Motor neuron (in vitro differentiated cells): ENCODE measurements at regions of chr17 and their contacts with region 1.

Region 1: DNA sequence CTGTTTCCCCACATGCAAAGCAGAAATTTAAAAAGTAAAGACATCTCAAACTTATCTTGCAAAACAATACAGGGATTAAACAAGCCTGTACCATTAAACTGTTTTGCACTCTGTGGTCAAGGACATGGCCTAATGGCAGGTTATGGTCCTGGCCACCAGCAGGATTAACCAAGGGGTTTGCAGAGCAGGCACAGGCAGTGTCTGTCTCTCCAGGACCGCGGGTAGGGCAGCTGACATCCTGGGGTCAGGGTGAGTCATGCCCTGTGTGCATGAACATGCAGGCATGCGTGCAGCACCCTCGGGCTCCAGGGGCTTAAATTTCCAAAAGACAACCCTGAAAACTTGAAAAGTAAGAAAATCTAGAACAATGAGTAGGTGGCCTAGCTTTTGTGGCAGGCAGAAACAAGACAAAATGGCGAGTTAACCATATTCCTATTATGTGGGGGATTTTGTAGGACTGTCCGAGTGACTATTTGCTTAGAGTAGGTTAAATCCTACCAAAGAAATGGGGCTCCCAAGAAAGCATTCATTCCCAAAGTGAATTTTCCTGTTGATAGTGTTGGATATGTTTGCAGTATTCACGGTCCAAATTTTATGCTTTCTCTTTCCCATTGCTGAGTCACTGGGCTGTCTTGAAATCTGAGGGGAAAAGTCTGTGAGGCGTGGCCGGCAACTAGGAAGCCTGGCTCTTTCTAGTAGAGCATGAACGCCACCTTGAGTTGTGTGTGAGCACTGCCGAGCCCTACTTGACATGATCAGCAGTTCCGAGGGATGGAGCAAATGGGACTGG is 158.4 kb upstream of the FAM20A start:
- ATAC-seq: peak; percentile 93 to 99 (median 96)
- H3K4me3 ChIP-seq: peak overlapping the region in 3 of 5 donors; percentile 9 to 22 (median 18)
- H3K27ac ChIP-seq: peak overlapping the region; percentile 14 to 50
- H3K4me1 ChIP-seq: peaks cover 6 to 8% of the 10 kb centered on the region in 2 donors

Region 2: GRCh38 chr17:68519911-68520310 is 239.6 kb before region 1 on chr17:
- in situ Hi-C with region 1: loop called in 3 of 9 experiments (anchors 10 to 25 kb)
- ATAC-seq: peak in 2 of 8 experiments; percentile 25 to 26
- H3K4me3 ChIP-seq: no peak overlapping the region
- H3K27ac ChIP-seq: no peak overlapping the region
- H3K4me1 ChIP-seq: peaks cover 0 to 5% of the 10 kb centered on the region in 2 donors

Region 3: GRCh38 chr17:68832109-68832802 is 72.7 kb after region 1 on chr17:
- in situ Hi-C with region 1: no loop called
- ATAC-seq: no peak
- H3K4me3 ChIP-seq: no peak overlapping the region
- H3K27ac ChIP-seq: no peak overlapping the region
- H3K4me1 ChIP-seq: no peaks in the 10 kb centered on the region

Region 4: GRCh38 chr17:68868708-68869107 is 109.2 kb after region 1 on chr17:
- in situ Hi-C with region 1: no loop called
- ATAC-seq: no peak
- H3K4me3 ChIP-seq: no peak overlapping the region
- H3K27ac ChIP-seq: no peak overlapping the region
- H3K4me1 ChIP-seq: no peaks in the 10 kb centered on the region